GM13977 (cell line): ENCODE measurements at regions of chr5 and their contacts with region 1.

Region 1: GRCh38 chr5:68287976-68288706 is 72.6 kb downstream of the PIK3R1 start:
- DNase-seq: peak; percentile 82
- CTCF ChIP-seq: no peak

Region 2: DNA sequence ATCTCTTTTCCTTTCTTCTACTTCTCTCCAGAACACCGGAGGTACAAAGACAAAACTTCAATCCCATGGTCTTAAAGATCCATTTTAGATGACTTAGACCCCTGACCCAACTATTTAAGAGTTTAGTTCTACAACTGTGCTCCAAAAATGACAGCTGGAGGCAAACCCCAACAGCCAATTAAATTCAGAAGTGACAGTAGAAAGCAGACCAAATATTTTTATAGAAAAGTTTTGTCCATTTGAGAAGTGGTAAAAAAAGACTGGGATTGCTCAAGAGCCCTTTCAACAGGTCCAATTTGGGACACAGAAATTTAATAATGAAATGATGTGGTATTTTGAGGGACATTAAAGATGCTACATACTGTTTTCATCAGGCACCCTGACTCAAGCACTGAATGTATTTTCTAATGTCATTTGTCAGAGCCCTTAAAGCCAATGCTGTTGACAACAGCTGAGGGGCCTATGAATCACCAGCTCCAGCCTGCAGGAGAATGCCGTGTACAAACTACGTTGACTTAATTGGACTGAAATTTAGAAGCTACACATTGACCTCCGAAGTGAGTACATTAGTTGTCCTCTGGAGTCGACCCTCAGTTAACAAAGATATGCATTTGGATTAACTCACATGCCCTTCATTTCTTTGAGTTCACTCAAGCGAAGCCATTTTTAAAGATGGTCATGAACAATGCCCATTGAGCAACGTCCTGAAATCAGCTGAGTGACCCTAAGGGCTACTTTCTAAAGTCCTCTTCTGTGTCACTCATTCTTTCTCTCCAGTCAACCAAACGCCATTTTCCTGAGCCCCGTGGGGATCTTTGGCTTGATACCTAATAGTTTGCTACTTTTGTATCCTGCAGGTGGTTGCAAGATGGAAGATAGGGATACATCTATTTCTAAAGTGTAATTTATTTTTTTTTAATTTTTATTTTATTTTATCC is 219.9 kb before region 1 on chr5:
- in situ Hi-C with region 1: no loop called
- DNase-seq: no peak
- CTCF ChIP-seq: no peak

Region 3: GRCh38 chr5:68456756-68457217 is 168.6 kb after region 1 on chr5:
- in situ Hi-C with region 1: loop called (anchors 5 kb)
- DNase-seq: no peak
- CTCF ChIP-seq: no peak

Region 4: DNA sequence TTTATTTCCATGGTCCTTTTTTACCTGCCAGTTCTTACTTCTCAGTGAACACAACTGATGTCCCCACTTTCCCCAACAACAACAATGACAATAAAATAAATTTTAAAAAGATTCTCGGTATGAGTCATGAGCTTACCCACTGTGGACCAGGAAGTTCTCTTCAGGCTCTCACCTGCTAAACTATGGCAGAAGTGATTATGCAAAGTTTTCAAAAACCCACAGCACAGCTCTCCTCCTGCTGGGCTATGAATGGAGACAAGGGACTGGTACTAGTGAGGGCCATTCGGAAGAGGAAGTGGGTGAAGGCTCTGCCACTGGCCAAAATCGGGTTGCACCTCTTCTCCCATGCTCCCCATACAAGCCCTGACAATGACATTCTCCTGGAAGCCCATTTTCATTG is 356.8 kb after region 1 on chr5:
- in situ Hi-C with region 1: loop called (anchors 10 kb)
- DNase-seq: peak; percentile 22
- CTCF ChIP-seq: no peak

Region 5: DNA sequence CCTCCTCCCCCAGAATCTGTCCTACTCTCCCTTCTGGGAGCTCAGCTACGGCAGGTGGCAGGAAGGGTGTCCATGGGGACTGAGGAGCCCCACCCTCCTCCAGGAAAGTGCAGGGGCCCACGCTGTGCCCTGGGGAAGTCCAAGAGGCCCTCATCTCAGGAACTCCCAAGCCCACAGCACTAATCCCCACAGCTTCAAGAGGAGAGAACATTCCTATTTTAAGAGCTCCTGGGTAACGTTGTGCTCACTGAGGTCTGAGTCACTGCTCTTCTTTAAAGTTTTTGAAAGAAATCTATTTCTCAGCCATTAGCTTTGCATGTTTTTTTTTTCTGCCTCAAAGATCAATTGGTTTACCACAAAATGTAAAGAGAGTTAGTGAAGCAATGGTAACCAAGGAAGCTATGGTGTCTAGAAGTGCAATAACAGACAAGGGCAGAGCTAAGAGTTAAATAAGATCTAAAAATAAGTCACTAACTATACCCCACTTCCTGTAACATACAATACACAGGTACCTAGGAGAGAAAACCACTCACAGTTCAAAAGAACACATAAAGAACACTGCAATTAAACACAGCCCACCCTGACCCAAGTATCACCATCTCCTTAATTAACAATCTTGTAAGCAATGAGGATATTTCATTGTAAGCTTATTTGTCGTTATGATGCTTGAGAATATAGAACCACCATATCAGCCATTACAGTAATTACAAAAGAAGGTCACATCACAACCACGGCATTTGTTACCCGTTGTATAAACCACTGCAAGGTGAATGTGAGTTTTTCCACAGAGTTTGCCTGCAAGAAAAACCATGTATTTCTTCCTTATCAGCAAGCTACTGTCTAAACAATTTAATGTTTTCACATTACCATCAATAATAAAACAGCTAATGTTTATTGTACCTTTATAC is 423.4 kb after region 1 on chr5:
- in situ Hi-C with region 1: loop called (anchors 25 kb)
- DNase-seq: peak; percentile 73
- CTCF ChIP-seq: no peak